Activated B cell treated with CpG ODN at 0.5 μM for 24 hours (primary cell): ENCODE measurements at regions of chr2 and their contacts with region 1.

Region 1: GRCh38 chr2:180240774-180241173 is 233.7 kb upstream of the CWC22 start:
- DNase-seq: no peak
- ATAC-seq: no peak
- H3K4me3 Mint-ChIP-seq: no peak overlapping the region
- H3K27ac Mint-ChIP-seq: no peak overlapping the region
- H3K4me1 Mint-ChIP-seq: no peaks in the 10 kb centered on the region
- H3K27me3 Mint-ChIP-seq: no peaks in the 10 kb centered on the region
- CTCF ChIP-seq: no peak

Region 2: DNA sequence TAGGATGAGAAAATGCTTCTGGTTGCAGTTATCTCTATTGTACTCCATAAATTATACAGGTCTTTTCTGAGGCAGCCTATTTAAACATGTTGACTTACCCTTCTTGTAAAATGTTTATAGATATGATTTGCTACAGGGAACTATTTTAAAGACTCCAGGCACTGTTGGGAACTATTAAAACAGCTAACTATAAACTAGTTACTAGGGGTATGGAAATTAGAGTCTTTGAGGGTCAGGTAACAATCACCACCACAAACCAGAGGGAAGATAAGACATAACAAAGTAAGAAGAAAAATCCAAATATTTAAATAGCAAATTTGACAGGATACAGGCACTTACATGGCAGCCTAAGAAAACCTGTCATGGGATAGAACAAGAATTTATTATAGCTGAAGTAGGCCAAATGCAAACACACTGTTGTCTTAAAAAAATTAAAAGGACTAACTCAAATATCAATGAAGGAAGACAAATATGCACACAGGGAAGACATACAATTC is 17.3 kb after region 1 on chr2:
- CTCF ChIA-PET with region 1: no interaction called
- POLR2A ChIA-PET with region 1: no interaction called
- intact Hi-C with region 1: no loop called
- DNase-seq: no peak
- ATAC-seq: no peak
- H3K4me3 Mint-ChIP-seq: no peak overlapping the region
- H3K27ac Mint-ChIP-seq: no peak overlapping the region
- H3K4me1 Mint-ChIP-seq: peaks cover 15% of the 10 kb centered on the region
- H3K27me3 Mint-ChIP-seq: no peaks in the 10 kb centered on the region
- CTCF ChIP-seq: no peak

Region 3: DNA sequence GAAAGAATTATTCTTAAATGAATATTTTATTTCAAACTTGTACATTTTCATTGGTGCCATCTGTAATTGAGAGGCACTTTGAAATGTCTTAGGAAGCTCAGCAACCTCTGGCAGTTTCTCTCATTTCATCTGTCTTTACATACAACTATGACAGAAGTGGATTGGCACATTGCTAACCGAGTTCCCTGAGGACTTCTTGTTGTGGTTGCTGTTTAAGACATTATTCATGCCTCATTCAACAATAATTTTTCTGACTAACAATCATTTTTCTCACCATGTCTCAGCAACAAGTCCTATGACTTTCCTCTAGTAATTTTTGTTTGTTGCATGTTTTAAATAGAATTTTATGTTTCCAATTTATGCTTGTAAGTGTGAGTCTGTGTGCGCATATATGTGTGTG is 50.3 kb after region 1 on chr2:
- CTCF ChIA-PET with region 1: no interaction called
- POLR2A ChIA-PET with region 1: no interaction called
- intact Hi-C with region 1: no loop called
- DNase-seq: no peak
- ATAC-seq: no peak
- H3K4me3 Mint-ChIP-seq: no peak overlapping the region
- H3K27ac Mint-ChIP-seq: no peak overlapping the region
- H3K4me1 Mint-ChIP-seq: no peaks in the 10 kb centered on the region
- H3K27me3 Mint-ChIP-seq: no peaks in the 10 kb centered on the region
- CTCF ChIP-seq: no peak

Region 4: DNA sequence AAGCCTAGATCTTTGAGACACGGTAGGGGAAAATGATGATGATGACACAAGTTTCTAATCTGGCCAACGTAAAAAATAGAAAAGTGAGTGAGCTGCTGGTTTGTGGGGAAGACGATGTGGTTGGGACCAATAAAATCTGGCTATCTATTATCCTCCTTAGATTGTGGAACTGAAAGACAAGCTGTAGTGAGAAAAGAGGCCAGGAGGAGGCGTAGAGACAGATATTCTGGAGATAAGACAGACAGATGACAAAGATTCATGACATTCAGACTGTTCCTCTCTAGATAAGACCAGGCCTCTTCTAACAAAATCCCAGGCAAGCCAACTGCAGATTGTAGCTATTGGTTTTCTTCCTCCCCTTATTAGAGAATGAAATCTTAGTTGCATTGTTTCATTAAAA is 363.3 kb after region 1 on chr2:
- CTCF ChIA-PET with region 1: no interaction called
- POLR2A ChIA-PET with region 1: no interaction called
- intact Hi-C with region 1: loop called (anchors 5 kb)
- DNase-seq: no peak
- ATAC-seq: no peak
- H3K4me3 Mint-ChIP-seq: no peak overlapping the region
- H3K27ac Mint-ChIP-seq: no peak overlapping the region
- H3K4me1 Mint-ChIP-seq: no peaks in the 10 kb centered on the region
- H3K27me3 Mint-ChIP-seq: no peaks in the 10 kb centered on the region
- CTCF ChIP-seq: no peak

Region 5: DNA sequence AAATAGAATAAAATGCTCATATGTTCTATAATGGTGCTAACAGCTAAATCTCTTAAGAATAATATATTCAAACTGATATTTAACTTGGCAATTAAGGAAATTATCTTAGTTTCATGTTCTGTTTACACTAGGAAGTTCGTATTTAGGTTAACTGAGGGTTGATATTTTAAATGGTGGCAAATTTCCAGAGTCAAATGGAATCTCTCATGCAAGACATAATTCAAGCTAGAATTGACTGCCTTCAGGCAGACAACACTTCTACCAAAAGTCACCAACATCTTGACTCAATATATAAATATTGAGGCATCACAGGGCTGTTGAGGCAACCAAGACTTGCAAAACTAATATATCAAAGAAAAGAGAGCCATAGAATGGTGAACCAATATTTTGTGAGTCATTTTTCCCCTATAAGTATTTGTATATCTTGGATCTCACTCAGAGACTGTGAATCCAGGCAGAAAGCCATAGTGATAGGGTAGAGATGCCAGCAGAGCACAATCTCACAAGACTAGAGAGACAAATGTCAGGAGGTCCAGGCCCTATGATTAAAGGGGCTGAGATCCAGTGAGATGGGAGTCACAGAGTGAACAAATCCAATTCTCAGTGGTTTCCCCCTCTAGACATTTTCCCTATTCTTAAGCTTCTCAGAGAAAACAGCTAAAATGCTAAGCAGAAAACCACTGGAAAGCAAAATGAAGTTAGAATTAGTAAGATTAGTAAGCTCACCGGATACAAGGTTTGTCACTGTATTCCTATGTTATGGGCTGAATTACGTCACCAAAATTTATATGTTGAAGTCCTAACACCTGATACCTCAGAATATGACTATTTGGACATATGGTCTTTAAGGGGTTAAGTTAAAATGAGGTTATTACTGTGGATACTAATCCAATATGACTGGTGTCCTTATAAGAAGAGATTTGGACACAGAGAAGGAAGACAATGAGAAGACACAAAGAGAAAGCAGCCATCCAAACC is 381.5 kb after region 1 on chr2:
- CTCF ChIA-PET with region 1: no interaction called
- POLR2A ChIA-PET with region 1: no interaction called
- intact Hi-C with region 1: no loop called
- DNase-seq: no peak
- ATAC-seq: no peak
- H3K4me3 Mint-ChIP-seq: no peak overlapping the region
- H3K27ac Mint-ChIP-seq: no peak overlapping the region
- H3K4me1 Mint-ChIP-seq: no peaks in the 10 kb centered on the region
- H3K27me3 Mint-ChIP-seq: no peaks in the 10 kb centered on the region
- CTCF ChIP-seq: no peak